Activated CD4-positive, alpha-beta memory T cell treated with anti-CD3 and anti-CD28 coated beads for 36 hours (primary cell): ENCODE measurements at regions of chr1 and their contacts with region 1.

Region 1: DNA sequence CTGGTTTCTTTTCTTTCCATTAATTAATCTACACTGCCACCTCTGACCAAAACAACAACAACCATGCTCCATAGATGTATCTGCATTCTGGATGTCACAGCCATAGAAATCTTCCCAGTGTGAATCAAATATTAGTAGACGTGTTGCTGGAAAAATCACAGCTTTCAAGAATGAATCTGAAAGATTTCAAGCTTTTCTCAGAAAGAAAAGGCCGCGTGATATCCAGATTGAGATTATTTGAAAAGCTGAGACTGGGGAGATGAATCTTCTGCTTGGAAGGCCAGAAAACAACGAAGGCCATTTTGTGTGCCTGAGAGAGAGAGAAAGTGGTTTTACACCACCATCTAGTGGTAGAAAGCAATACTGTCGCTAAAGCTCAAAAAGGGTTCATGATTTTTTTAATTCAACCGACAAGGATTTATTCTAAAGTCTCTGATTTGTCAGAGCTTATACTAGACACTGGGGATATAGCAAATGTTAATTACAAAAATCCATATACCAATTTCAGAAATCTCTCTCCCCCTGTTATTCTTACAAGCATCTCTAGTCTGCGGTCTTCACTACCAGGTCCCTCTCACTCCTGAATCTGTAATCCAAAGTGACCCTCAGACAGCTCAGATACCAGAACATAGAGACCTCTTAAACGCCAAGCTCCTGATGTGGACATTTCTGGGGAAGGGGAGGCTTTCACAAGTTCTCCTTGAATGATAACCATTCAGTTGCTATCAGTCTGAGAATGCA is 87.5 kb upstream of the SGIP1 start:
- DNase-seq: peak; percentile 23
- H3K4me3 Mint-ChIP-seq: peak overlapping the region; percentile 6
- H3K27ac Mint-ChIP-seq: peak overlapping the region; percentile 86
- H3K4me1 Mint-ChIP-seq: peaks cover 21% of the 10 kb centered on the region
- H3K27me3 Mint-ChIP-seq: peaks cover 4% of the 10 kb centered on the region

Region 2: DNA sequence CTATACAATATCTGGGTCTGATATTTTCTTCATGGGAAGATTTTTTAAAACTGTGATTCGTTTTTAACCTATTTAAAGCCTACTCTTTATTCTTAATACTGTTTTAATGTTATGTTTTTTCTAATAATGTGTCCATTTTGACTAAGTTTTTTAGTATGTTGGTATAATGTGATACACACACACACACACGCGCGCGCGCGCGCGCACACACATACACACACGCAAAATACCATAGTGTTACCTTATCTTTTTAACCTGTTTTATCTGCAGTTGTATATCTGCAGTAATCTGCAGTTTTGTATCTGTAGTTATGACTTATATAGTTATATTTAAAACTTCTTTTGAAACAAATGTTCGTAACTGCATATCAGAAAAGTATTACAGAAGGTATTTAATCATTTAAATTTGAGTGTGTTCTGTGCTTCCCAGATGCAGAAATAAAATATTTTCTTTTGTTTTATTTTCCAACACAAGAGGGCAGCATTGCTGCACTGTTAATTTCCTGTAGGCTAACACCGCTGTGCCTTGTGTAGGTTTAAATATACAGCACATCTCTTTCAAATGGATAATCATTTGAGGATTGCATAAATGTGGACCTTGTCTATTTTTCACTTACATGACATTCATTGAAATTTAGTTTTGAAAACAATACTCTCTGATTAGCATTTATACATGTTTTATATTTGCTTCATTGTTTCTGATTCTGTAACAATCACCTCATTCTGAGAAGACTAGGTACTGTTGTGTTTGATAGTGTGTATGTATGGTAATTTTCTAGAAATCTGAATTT is 487.7 kb before region 1 on chr1:
- CTCF ChIA-PET with region 1: interaction called, 65 read pairs
- POLR2A ChIA-PET with region 1: no interaction called
- intact Hi-C with region 1: loop called (anchors 1 kb)
- DNase-seq: peak; percentile 13
- H3K4me3 Mint-ChIP-seq: no peak overlapping the region
- H3K27ac Mint-ChIP-seq: no peak overlapping the region
- H3K4me1 Mint-ChIP-seq: no peaks in the 10 kb centered on the region
- H3K27me3 Mint-ChIP-seq: peaks cover 2% of the 10 kb centered on the region

Region 3: GRCh38 chr1:66276218-66276617 is 170.2 kb before region 1 on chr1:
- CTCF ChIA-PET with region 1: interaction called, 22 read pairs
- POLR2A ChIA-PET with region 1: interaction called, 5 read pairs
- intact Hi-C with region 1: no loop called
- DNase-seq: peak; percentile 44
- H3K4me3 Mint-ChIP-seq: peak overlapping the region; percentile 49
- H3K27ac Mint-ChIP-seq: peak overlapping the region; percentile 65
- H3K4me1 Mint-ChIP-seq: peaks cover 87% of the 10 kb centered on the region
- H3K27me3 Mint-ChIP-seq: no peaks in the 10 kb centered on the region

Region 4: GRCh38 chr1:66300972-66301451 is 145.4 kb before region 1 on chr1:
- CTCF ChIA-PET with region 1: interaction called, 17 read pairs
- POLR2A ChIA-PET with region 1: no interaction called
- intact Hi-C with region 1: no loop called
- DNase-seq: peak; percentile 60
- H3K4me3 Mint-ChIP-seq: peak overlapping the region; percentile 65
- H3K27ac Mint-ChIP-seq: peak overlapping the region; percentile 77
- H3K4me1 Mint-ChIP-seq: peaks cover 50% of the 10 kb centered on the region
- H3K27me3 Mint-ChIP-seq: no peaks in the 10 kb centered on the region

Region 5: GRCh38 chr1:66339944-66340343 is 106.5 kb before region 1 on chr1:
- CTCF ChIA-PET with region 1: interaction called, 42 read pairs
- POLR2A ChIA-PET with region 1: no interaction called
- intact Hi-C with region 1: loop called (anchors 1 kb)
- DNase-seq: no peak
- H3K4me3 Mint-ChIP-seq: peak overlapping the region; percentile 72
- H3K27ac Mint-ChIP-seq: peak overlapping the region; percentile 90
- H3K4me1 Mint-ChIP-seq: peaks cover 74% of the 10 kb centered on the region
- H3K27me3 Mint-ChIP-seq: no peaks in the 10 kb centered on the region

Region 6: GRCh38 chr1:66416295-66416694 is 30.1 kb before region 1 on chr1:
- CTCF ChIA-PET with region 1: no interaction called
- POLR2A ChIA-PET with region 1: no interaction called
- intact Hi-C with region 1: no loop called
- DNase-seq: no peak
- H3K4me3 Mint-ChIP-seq: no peak overlapping the region
- H3K27ac Mint-ChIP-seq: no peak overlapping the region
- H3K4me1 Mint-ChIP-seq: peaks cover 7% of the 10 kb centered on the region
- H3K27me3 Mint-ChIP-seq: no peaks in the 10 kb centered on the region

Region 7: DNA sequence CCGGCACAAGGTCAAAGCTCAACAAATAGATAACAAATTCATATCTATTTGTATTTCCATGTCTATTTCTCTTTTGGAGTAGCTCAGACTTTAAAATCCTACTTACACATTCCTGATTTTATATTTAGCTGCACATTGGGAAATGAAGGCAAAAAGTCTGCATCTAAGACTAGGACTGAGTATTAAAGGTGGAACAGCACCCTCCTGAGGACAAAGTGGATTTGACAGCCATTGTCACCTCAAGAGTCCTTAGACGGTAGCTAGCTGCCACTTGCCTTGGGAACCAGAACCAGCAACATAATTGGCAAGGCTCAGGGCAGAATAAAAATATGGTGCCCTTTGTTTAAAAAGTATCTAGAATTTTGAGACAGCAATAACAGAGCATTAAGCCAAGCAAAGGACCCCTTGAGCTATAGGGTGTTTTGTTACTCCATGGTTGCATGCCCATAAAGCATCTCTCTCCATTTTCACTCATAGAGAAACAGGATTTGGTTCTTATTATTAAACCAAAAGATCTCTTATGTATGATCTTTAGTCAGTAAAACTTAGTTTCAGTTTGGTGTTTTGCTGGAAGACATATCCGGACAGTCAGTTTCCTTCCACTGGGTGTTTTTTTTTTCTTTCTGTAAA is 57.5 kb after region 1 on chr1:
- CTCF ChIA-PET with region 1: interaction called, 17 read pairs
- POLR2A ChIA-PET with region 1: no interaction called
- intact Hi-C with region 1: loop called (anchors 2 kb)
- DNase-seq: peak; percentile 49
- H3K4me3 Mint-ChIP-seq: no peak overlapping the region
- H3K27ac Mint-ChIP-seq: no peak overlapping the region
- H3K4me1 Mint-ChIP-seq: no peaks in the 10 kb centered on the region
- H3K27me3 Mint-ChIP-seq: peaks cover 14% of the 10 kb centered on the region

Region 8: DNA sequence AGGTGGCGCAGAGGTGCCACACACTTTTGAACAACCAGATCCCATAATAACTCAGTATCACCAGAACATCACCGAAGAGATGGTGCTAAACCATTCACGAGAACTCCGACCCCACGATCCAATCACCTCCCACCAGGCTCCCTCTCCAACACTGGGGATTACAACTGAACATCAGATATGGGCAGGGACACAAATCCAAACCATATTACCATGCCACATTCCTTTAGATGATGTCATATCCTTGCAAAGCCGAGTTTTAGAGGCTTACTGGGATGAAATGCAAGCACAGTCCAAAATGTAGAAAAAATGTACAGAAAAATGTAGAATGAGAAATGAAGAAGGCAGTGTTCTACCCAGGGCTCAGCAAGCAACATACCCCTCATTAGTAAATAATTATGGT is 152.2 kb after region 1 on chr1:
- CTCF ChIA-PET with region 1: no interaction called
- POLR2A ChIA-PET with region 1: no interaction called
- intact Hi-C with region 1: no loop called
- DNase-seq: no peak
- H3K4me3 Mint-ChIP-seq: no peak overlapping the region
- H3K27ac Mint-ChIP-seq: no peak overlapping the region
- H3K4me1 Mint-ChIP-seq: peaks cover 4% of the 10 kb centered on the region
- H3K27me3 Mint-ChIP-seq: peaks cover 18% of the 10 kb centered on the region